Calu3 (cell line): ENCODE measurements at regions of chr1 and their contacts with region 1.

Region 1: DNA sequence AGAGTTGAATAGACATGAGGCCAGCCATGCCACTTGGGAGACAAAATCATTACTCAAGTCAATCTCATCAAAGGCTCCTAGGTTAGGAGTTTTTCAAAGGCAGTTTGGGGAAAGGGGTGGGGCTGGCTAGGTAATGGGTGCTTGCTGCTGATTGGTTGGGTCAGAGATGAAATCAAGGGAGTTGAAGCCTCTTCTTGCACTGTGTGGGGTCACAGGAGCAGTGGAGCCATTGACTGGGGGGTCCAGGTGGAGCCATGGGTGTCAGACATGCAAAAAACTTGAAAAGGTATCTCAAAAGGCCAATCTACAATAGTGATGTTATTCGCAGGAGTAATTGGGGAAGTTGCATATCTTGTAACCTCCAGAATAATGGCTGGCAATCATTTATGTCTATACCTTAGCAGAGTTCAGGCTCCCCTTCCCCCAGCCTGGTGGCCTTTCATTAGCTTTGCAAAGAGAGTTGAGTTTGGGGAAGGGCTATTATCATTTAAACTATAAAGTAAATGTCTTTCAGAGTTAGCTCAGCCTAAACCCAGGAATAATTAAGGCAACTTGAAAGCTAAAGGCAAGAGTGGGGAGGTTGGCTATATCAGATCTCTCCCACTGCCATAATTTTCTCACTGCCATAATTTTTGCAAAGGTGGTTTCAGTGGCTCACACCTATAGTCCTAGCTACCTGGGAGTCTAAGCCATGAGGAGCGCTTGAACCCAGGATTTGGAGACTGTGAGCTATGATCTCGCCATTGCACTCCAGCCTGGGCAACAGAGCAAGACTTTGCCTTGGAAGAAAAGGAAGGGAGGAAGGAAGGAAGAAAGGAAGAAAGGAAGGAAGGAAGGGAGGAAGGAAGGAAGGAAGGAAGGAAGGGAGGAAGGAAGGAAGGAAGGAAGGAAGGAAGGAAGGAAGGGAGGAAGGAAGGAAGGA is 7.8 kb upstream of the PINK1 start:
- DNase-seq: no peak
- H3K4me3 Mint-ChIP-seq: no peak overlapping the region
- H3K27ac Mint-ChIP-seq: no peak overlapping the region
- H3K4me1 Mint-ChIP-seq: no peaks in the 10 kb centered on the region
- H3K27me3 Mint-ChIP-seq: peaks cover 32% of the 10 kb centered on the region
- CTCF ChIP-seq: no peak

Region 2: DNA sequence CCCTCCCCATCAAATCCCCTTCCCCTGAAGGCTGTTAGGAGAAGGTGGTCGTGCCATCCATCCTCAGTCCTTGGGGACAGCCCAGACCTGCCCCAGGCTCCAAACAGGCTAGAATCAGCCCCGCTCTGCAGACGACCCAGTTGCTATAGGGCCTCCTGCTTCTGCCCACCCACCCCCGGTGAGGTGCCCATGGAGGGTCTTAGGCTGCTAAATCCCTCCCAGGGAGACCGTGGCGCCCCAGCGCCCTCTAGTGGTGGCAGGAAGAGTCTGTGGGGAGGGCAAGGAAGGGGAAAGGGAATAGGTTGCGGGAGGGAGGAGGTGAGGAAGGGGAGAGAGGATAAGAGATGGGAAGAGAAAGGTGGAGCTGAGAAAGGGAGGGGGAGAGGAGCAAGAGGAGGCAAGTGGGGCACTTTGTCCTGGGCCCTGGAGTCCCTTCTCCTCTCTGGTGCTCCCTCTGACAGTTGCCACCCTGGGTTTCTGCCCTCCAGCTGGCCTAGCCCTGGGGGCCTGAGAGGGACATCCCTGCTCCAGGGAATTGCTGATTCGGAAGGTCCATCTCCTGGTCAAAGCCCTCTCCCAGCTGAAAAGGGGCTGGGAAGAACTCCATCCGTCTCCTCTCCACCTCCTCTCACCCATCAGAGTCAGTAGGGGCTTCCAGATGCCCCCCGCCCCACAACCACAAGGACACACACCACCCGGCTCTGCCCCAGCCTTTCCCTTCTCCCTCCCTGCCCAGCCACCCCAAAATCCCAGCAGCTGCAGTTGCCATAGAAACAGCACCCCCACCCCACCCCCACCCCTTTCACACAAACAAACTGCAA is 194.9 kb before region 1 on chr1:
- CTCF ChIA-PET with region 1: interaction called, 19 read pairs
- intact Hi-C with region 1: no loop called
- DNase-seq: peak; percentile 47
- H3K4me3 Mint-ChIP-seq: no peak overlapping the region
- H3K27ac Mint-ChIP-seq: no peak overlapping the region
- H3K4me1 Mint-ChIP-seq: no peaks in the 10 kb centered on the region
- H3K27me3 Mint-ChIP-seq: peaks cover 9% of the 10 kb centered on the region
- CTCF ChIP-seq: peak; percentile 78

Region 3: DNA sequence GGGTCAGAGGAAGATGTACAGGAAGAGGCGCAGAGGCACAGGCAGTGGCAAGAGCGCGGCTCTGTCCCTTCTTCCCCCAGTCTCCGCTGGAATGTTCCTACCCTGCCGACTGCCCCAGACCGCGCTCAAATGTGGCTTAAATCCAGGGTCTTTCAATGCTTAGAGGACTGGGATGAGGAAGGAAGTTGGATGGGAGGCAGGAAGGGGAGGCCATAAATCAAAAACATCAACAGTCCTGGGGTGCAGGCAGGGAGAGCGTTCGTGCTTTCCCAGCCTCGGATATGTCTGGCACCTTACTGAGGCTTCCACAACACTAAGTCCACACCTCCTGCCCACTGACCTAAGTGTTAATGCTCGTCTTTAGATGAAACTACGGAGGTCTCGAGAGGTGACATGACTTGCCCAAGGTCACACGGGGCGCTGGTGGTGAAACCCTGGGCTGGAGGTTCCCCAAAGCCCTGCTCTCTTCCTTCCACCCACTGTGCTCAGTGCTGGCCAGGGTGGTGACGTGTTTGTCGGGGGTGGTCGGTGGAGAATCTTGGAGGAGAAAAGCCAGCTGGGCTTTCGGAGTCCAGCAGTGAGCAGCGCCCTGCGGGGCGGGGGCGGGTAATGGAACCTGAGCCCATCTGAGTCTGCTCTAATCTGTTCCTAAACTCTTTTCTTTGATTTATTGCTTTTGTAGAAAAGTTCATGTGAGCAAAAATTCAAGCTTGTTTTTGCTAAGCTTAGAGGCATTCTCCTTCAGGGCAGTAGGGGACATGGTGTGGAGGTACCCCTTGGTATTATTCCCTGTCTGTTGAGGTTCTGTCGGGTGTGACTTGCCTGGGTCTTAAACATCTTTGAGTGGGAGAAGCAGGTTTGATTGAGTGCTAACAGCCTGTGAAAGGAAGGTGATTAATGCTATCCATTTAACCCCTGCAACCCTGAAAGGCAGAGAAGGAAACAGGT is 35.8 kb before region 1 on chr1:
- CTCF ChIA-PET with region 1: no interaction called
- intact Hi-C with region 1: no loop called
- DNase-seq: no peak
- H3K4me3 Mint-ChIP-seq: peak overlapping the region; percentile 68
- H3K27ac Mint-ChIP-seq: peak overlapping the region; percentile 66
- H3K4me1 Mint-ChIP-seq: peaks cover 10% of the 10 kb centered on the region
- H3K27me3 Mint-ChIP-seq: no peaks in the 10 kb centered on the region
- CTCF ChIP-seq: no peak